Activated T-helper 2 cell treated with anti-CD3 and anti-CD28 coated beads, Interferon-gamma antibody, Interleukin-2, Interleukin-4, amounts not matched to agents 10 μg/mL and 5 μg/mL and 100 μg/mL, durations not matched to agents 14 hours and 24 hours and 36 hours (primary cell): ENCODE measurements at regions of chr1 and their contacts with region 1.

Region 1: DNA sequence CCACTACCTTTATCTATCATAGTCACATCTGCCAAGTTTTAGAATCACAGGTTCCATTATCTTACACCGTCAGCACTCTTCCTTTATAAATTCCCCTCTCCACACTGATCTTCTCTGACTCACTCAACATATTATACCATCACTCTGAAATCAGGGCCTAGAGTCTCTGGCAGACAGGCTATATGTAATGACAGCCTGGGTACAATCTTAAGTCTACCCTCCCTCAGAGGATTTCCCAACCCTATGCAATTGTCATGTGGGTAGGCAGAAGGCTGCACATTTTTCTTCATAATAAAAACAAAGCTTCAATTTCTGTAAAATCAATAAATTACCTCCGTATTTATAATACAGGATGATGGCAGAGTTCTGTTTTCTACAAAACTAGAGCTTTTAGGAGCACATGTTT is 138.0 kb downstream of the RERE start:
- DNase-seq: no peak
- H3K4me3 Mint-ChIP-seq: no peak overlapping the region
- H3K27ac Mint-ChIP-seq: no peak overlapping the region
- H3K4me1 Mint-ChIP-seq: peaks cover 52% of the 10 kb centered on the region
- H3K27me3 Mint-ChIP-seq: no peaks in the 10 kb centered on the region

Region 2: GRCh38 chr1:8540261-8540941 is 139.0 kb before region 1 on chr1:
- intact Hi-C with region 1: no loop called
- DNase-seq: no peak
- H3K4me3 Mint-ChIP-seq: peak overlapping the region; percentile 54
- H3K27ac Mint-ChIP-seq: peak overlapping the region; percentile 86
- H3K4me1 Mint-ChIP-seq: peaks cover 53% of the 10 kb centered on the region
- H3K27me3 Mint-ChIP-seq: no peaks in the 10 kb centered on the region

Region 3: GRCh38 chr1:8604041-8604945 is 75.1 kb before region 1 on chr1:
- intact Hi-C with region 1: loop called (anchors 2 kb)
- DNase-seq: peak; percentile 46
- H3K4me3 Mint-ChIP-seq: peak overlapping the region; percentile 72
- H3K27ac Mint-ChIP-seq: peak overlapping the region; percentile 93
- H3K4me1 Mint-ChIP-seq: peaks cover 52% of the 10 kb centered on the region
- H3K27me3 Mint-ChIP-seq: no peaks in the 10 kb centered on the region

Region 4: DNA sequence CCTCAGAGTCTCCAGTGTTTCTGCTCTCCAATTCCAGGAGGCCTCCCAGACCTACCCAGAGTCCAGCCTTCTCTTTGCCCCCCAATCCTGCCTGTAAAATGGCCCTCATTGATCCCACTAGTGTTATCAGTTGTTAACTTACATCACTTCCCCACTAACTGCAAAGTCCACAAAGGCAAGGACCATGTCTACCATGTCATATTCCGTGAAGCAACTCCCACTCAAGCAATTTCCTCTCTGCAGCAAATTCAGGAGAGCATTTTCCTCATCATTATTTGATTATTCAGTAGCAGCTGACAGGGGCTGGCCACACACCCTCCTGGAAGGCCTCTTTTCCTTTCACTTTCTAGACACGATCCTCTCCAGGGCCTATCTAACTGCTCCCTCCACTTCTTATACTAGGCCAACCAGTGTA is 15.5 kb before region 1 on chr1:
- intact Hi-C with region 1: loop called (anchors 2 kb)
- DNase-seq: no peak
- H3K4me3 Mint-ChIP-seq: no peak overlapping the region
- H3K27ac Mint-ChIP-seq: no peak overlapping the region
- H3K4me1 Mint-ChIP-seq: peaks cover 21% of the 10 kb centered on the region
- H3K27me3 Mint-ChIP-seq: no peaks in the 10 kb centered on the region

Region 5: DNA sequence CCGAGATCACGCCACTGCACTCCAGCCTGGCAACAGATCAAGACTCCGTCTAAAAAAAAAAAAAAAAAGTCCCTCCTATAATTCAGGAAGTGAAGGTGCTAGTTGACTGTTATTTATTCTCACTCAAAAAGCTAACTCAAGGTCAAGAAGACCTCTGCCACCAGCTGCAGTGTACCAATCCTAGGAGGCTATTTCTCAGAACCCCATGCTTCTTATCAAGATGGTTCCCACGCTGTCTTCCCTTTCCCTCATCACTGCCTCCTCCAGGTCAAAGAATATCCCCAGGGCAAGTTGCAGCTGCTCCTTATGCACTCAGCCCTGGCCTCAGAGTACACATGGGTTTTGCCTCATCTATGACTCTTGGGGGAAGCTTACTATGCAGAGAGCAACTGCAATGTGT is 84.5 kb after region 1 on chr1:
- intact Hi-C with region 1: no loop called
- DNase-seq: no peak
- H3K4me3 Mint-ChIP-seq: no peak overlapping the region
- H3K27ac Mint-ChIP-seq: no peak overlapping the region
- H3K4me1 Mint-ChIP-seq: peaks cover 15% of the 10 kb centered on the region
- H3K27me3 Mint-ChIP-seq: no peaks in the 10 kb centered on the region

Region 6: GRCh38 chr1:9004700-9005394 is 325.4 kb after region 1 on chr1:
- intact Hi-C with region 1: no loop called
- DNase-seq: peak; percentile 75
- H3K4me3 Mint-ChIP-seq: no peak overlapping the region
- H3K27ac Mint-ChIP-seq: no peak overlapping the region
- H3K4me1 Mint-ChIP-seq: peaks cover 2% of the 10 kb centered on the region
- H3K27me3 Mint-ChIP-seq: no peaks in the 10 kb centered on the region